Mammary epithelial cell (primary cell): ENCODE measurements at regions of chr1 and their contacts with region 1.

Region 1: DNA sequence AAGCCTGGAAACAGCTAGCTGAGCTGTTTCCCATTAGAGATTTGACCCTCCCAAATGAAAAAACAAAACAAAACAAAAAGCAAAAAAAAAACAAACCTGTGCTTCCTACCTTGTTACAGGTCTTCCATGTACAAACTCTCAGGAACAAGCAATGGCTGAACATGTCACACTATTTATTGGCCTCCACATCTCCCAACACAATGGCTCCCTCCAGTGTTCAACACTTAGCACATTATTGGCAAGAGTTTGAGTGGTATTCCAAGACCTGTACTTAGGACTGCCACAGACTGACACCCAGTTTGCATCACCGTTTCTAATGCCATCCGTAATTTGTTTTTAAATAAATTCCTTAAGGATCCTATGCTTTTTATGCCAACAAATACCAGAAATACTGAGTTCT is 195.0 kb upstream of the OLFM3 start:
- DNase-seq: peak; percentile 54
- H3K4me3 ChIP-seq: no peak overlapping the region
- H3K27ac ChIP-seq: no peak overlapping the region
- H3K4me1 ChIP-seq: no peaks in the 10 kb centered on the region
- H3K27me3 ChIP-seq: no peaks in the 10 kb centered on the region
- CTCF ChIP-seq: peak; percentile 63 to 83

Region 2: DNA sequence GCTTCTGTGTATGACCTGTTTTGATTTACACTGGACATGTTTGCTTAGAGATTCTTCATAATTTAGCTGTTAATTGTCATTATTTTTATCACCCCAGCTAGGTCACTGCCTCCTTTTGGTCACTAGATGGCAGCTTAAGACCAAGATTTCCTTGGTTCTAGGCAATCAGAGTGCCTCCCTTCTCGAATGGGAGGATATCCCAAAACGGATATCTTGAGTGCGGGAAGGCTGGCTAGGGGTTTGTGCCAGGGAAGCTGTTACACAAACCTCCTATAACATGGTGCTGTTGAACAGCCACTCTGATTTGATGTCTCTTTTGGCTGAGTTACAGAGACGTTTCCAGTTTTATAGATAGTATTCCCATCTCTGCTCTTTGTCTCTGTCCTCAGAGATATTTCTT is 671.4 kb before region 1 on chr1:
- CTCF ChIA-PET with region 1: no interaction called
- dilution Hi-C with region 1: no loop called
- in situ Hi-C with region 1: no loop called
- intact Hi-C with region 1: loop called (anchors 1 kb)
- DNase-seq: peak; percentile 42
- H3K4me3 ChIP-seq: no peak overlapping the region
- H3K27ac ChIP-seq: no peak overlapping the region
- H3K4me1 ChIP-seq: no peaks in the 10 kb centered on the region
- H3K27me3 ChIP-seq: no peaks in the 10 kb centered on the region
- CTCF ChIP-seq: peak; percentile 79 to 89

Region 3: GRCh38 chr1:101567582-101568189 is 624.0 kb before region 1 on chr1:
- CTCF ChIA-PET with region 1: no interaction called
- dilution Hi-C with region 1: no loop called
- in situ Hi-C with region 1: no loop called
- intact Hi-C with region 1: loop called (anchors 5 kb)
- DNase-seq: peak; percentile 20
- H3K4me3 ChIP-seq: no peak overlapping the region
- H3K27ac ChIP-seq: no peak overlapping the region
- H3K4me1 ChIP-seq: no peaks in the 10 kb centered on the region
- H3K27me3 ChIP-seq: peaks cover 2% of the 10 kb centered on the region
- CTCF ChIP-seq: peak; percentile 94 to 96

Region 4: DNA sequence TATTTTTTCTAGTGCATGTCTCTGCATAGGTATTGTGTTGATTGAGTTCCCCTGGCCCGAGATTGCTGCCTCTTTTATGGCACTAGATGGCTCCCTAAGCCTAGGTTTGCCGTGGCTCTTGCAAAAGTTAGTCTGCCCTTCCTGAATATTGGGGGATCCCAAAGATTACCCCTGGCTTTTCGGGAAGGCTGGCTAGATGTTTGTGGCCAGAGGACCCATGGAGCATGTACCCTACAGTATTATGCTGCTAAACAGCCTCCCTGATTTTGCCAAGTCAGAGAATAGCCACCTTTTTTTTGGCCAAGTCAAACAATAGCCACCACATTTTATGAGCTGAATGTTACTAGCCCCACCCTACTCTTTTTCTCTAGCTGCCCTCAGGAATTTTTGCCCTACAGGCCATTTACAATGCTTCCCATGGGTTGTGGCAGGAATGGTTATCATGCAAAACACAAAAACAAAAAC is 538.2 kb before region 1 on chr1:
- CTCF ChIA-PET with region 1: no interaction called
- dilution Hi-C with region 1: no loop called
- in situ Hi-C with region 1: loop called (anchors 25 kb)
- intact Hi-C with region 1: loop called (anchors 1 kb)
- DNase-seq: peak; percentile 54
- H3K4me3 ChIP-seq: no peak overlapping the region
- H3K27ac ChIP-seq: no peak overlapping the region
- H3K4me1 ChIP-seq: peaks cover 4% of the 10 kb centered on the region
- H3K27me3 ChIP-seq: no peaks in the 10 kb centered on the region
- CTCF ChIP-seq: peak; percentile 68 to 72

Region 5: DNA sequence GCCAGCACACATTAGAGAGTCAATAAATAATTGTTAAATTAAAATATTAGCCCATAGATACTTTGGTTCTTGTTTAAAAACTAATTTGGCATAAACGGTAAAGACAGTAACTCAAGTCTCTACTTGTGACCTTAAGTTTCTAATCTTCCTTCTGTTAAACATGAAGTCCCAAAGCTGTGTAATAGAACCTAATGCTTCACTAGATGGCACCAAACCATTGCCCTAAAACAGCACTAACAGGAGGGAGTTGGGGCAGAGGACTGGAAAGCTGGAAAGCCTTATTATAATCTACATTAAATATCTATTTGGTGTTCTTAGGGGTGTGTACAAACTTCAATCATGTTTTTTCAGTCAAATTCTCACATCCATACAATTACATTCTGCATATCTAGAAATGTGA is 371.7 kb before region 1 on chr1:
- CTCF ChIA-PET with region 1: interaction called, 3 read pairs
- dilution Hi-C with region 1: no loop called
- in situ Hi-C with region 1: loop called in 1 of 2 experiments (anchors 25 kb)
- intact Hi-C with region 1: loop called (anchors 1 kb)
- DNase-seq: peak; percentile 30
- H3K4me3 ChIP-seq: no peak overlapping the region
- H3K27ac ChIP-seq: no peak overlapping the region
- H3K4me1 ChIP-seq: no peaks in the 10 kb centered on the region
- H3K27me3 ChIP-seq: peaks cover 6% of the 10 kb centered on the region
- CTCF ChIP-seq: peak; percentile 29 to 67

Region 6: DNA sequence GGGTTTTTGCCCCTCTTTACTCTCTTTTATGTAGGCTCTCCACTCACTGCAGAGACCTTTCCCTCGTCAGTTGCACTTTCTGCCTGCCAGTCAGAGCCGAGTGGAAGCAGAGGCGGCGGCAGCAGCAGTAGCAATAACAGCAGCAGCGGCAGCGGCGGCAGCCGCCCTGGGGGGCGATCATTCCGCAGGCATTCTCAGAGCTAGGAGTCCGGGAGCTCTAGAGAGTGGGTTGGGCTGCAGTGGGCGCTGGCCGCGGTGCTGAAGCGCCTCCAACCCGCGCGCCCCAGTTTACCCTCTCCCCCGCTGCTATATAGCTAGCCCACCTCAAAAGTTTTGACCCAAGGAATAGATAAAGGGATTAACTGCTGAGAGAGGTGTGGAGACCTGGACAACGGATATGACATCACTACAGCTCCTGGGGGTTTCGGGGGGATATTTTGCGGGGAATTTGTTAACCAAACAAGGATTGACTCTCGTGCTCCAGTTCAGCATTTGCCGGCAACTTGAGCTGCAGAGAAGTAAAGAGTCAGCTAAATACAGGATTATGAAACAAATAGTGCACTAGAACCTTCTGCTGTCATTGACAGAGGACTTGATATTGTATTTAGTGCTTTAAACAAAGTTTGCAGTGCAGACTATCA is 194.8 kb before region 1 on chr1 and contains the start of gene OLFM3:
- CTCF ChIA-PET with region 1: no interaction called
- dilution Hi-C with region 1: no loop called
- in situ Hi-C with region 1: loop called in 1 of 2 experiments (anchors 25 kb)
- intact Hi-C with region 1: loop called (anchors 1 kb)
- DNase-seq: peak; percentile 20
- H3K4me3 ChIP-seq: no peak within 1 kb of the TSS
- H3K27ac ChIP-seq: no peak within 1 kb of the TSS
- H3K4me1 ChIP-seq: no peaks in the 10 kb centered on the region
- H3K27me3 ChIP-seq: peaks cover 14% of the 10 kb centered on the region
- CTCF ChIP-seq: no peak
- total RNA-seq, gene OLFM3: not detected

Region 7: GRCh38 chr1:102434421-102434820 is 242.7 kb after region 1 on chr1:
- CTCF ChIA-PET with region 1: no interaction called
- dilution Hi-C with region 1: no loop called
- in situ Hi-C with region 1: no loop called
- intact Hi-C with region 1: loop called (anchors 5 kb)
- DNase-seq: peak; percentile 4
- H3K4me3 ChIP-seq: no peak overlapping the region
- H3K27ac ChIP-seq: no peak overlapping the region
- H3K4me1 ChIP-seq: no peaks in the 10 kb centered on the region
- H3K27me3 ChIP-seq: no peaks in the 10 kb centered on the region
- CTCF ChIP-seq: peak; percentile 40 to 50